Adrenal gland (tissue), 19 donors: ENCODE measurements at regions of chr1 and their contacts with region 1.

Region 1: GRCh38 chr1:164772635-164773034 is 213.7 kb downstream of the PBX1 start:
- DNase-seq: peak; percentile 80 to 96 (median 93)
- H3K4me3 ChIP-seq: no peak overlapping the region
- H3K27ac ChIP-seq: peak overlapping the region; percentile 19 to 91 (median 83)
- H3K4me1 ChIP-seq: peaks cover 22 to 56% of the 10 kb centered on the region in 2 donors
- H3K27me3 ChIP-seq: no peaks in the 10 kb centered on the region
- CTCF ChIP-seq: no peak
- POLR2A ChIP-seq: peak in 1 of 2 donors; percentile 64

Region 2: DNA sequence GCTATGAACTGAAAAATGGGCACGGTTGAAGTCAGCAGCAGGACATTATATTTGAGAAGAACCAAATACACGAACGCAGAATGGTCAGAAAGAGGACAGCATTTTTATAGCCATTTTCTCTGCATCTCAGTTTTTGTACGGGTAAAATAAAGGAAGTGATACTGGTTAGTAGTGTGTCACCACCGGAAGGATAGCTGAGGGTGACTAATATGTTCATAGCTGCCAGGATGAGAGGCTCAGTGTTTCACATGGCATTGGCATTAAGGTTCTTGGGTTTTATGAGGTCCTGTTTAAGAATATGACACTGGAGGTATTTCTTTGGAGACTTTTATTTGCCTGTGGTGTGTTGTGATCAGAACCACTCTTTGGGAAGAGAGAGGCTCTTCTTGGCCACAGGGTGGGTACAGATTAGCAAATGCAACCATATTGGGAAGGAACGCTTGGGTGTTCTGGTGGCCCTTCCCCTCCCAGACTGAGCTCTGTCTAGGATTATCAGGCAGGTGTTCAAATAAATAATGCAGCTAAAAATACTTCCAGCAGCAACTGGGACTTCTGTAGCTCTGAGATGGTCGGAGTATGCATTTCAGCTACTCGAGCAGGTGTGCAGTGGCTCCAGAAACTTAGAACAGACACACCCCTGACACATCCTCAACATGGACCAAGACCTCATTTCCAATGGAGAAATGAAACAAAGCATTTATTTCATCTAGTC is 55.5 kb before region 1 on chr1:
- intact Hi-C with region 1: loop called in 1 of 2 experiments (anchors 10 kb)
- DNase-seq: peak in 2 of 7 donors; percentile 37 to 44
- H3K4me3 ChIP-seq: no peak overlapping the region
- H3K27ac ChIP-seq: peak overlapping the region in 2 of 5 donors; percentile 38 to 52
- H3K4me1 ChIP-seq: peaks cover 28 to 87% of the 10 kb centered on the region in 2 donors
- H3K27me3 ChIP-seq: no peaks in the 10 kb centered on the region
- CTCF ChIP-seq: no peak
- POLR2A ChIP-seq: no peak